CD4-positive, alpha-beta memory T cell (primary cell): ENCODE measurements at regions of chr2 and their contacts with region 1.

Region 1: GRCh38 chr2:197873293-197873701 is 68.9 kb downstream of the PLCL1 start:
- DNase-seq: no peak
- H3K4me3 ChIP-seq: no peak overlapping the region
- H3K4me3 Mint-ChIP-seq: no peak overlapping the region
- H3K27ac ChIP-seq: no peak overlapping the region
- H3K27ac Mint-ChIP-seq: no peak overlapping the region
- H3K4me1 ChIP-seq: peaks cover 43% of the 10 kb centered on the region
- H3K4me1 Mint-ChIP-seq: peaks cover 30 to 50% (median 42%) of the 10 kb centered on the region in 4 donors
- H3K27me3 ChIP-seq: no peaks in the 10 kb centered on the region
- H3K27me3 Mint-ChIP-seq: no peaks in the 10 kb centered on the region

Region 2: DNA sequence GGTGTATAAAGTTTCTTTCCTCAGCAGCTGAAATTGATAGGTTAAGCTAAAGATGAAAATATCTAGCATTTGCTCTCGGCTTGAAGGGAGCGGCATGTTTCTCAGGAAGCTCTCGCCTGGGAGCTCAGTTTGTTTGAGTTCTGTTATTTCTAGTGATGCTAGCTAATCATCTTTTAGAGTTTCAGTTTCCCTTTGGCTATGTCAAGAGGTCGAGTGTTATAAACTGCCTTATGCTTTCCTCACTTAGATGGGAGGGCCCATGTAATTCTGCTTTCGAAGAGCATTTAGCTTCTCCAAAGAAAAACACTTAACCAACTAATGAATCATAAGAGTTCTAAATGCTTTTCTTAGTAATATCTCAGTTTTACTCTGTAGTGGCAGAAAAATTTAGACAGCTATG is 35.3 kb before region 1 on chr2:
- CTCF ChIA-PET with region 1: interaction called, 3 read pairs
- POLR2A ChIA-PET with region 1: interaction called, 3 read pairs
- intact Hi-C with region 1: loop called (anchors 1 kb)
- DNase-seq: peak; percentile 36 to 54 (median 39)
- H3K4me3 ChIP-seq: no peak overlapping the region
- H3K4me3 Mint-ChIP-seq: peak overlapping the region; percentile 70 to 92 (median 78)
- H3K27ac ChIP-seq: peak overlapping the region; percentile 50
- H3K27ac Mint-ChIP-seq: peak overlapping the region; percentile 87 to 94 (median 92)
- H3K4me1 ChIP-seq: peaks cover 45% of the 10 kb centered on the region
- H3K4me1 Mint-ChIP-seq: peaks cover 32 to 56% (median 48%) of the 10 kb centered on the region in 4 donors
- H3K27me3 ChIP-seq: no peaks in the 10 kb centered on the region
- H3K27me3 Mint-ChIP-seq: no peaks in the 10 kb centered on the region

Region 3: DNA sequence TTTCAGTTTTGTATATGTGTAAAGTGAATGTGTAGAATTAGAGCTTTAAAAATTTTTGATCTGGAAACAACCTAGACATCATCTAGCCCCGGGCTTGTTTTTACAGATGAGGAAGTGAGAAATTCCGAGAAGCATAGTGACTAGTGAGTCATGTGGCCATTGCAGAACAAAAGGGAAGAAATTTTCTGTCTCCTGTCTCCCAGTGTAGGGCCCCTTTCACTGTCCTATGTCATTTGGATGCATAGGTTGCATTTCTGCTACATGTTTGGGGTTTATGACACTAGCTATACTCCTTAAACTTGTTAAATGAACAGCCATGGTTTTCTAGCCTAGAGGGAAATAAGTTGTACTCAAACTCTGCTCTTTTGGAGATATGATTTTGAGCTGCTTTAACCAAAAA is 15.7 kb after region 1 on chr2:
- CTCF ChIA-PET with region 1: interaction called, 3 read pairs
- POLR2A ChIA-PET with region 1: interaction called, 6 read pairs
- intact Hi-C with region 1: loop called (anchors 1 kb)
- DNase-seq: peak; percentile 22 to 61 (median 28)
- H3K4me3 ChIP-seq: no peak overlapping the region
- H3K4me3 Mint-ChIP-seq: peak overlapping the region in 7 of 8 donors; percentile 10 to 75 (median 69)
- H3K27ac ChIP-seq: no peak overlapping the region
- H3K27ac Mint-ChIP-seq: peak overlapping the region; percentile 48 to 93 (median 81)
- H3K4me1 ChIP-seq: peaks cover 59% of the 10 kb centered on the region
- H3K4me1 Mint-ChIP-seq: peaks cover 29 to 57% (median 40%) of the 10 kb centered on the region in 4 donors
- H3K27me3 ChIP-seq: no peaks in the 10 kb centered on the region
- H3K27me3 Mint-ChIP-seq: no peaks in the 10 kb centered on the region

Region 4: GRCh38 chr2:197931661-197932312 is 58.5 kb after region 1 on chr2:
- CTCF ChIA-PET with region 1: no interaction called
- POLR2A ChIA-PET with region 1: interaction called, 7 read pairs
- intact Hi-C with region 1: loop called (anchors 5 kb)
- DNase-seq: no peak
- H3K4me3 ChIP-seq: no peak overlapping the region
- H3K4me3 Mint-ChIP-seq: no peak overlapping the region
- H3K27ac ChIP-seq: no peak overlapping the region
- H3K27ac Mint-ChIP-seq: no peak overlapping the region
- H3K4me1 ChIP-seq: peaks cover 20% of the 10 kb centered on the region
- H3K4me1 Mint-ChIP-seq: peaks cover 30 to 46% (median 41%) of the 10 kb centered on the region in 4 donors
- H3K27me3 ChIP-seq: no peaks in the 10 kb centered on the region
- H3K27me3 Mint-ChIP-seq: no peaks in the 10 kb centered on the region